CD4-positive, alpha-beta T cell (primary cell): ENCODE measurements at regions of chr6 and their contacts with region 1.

Region 1: DNA sequence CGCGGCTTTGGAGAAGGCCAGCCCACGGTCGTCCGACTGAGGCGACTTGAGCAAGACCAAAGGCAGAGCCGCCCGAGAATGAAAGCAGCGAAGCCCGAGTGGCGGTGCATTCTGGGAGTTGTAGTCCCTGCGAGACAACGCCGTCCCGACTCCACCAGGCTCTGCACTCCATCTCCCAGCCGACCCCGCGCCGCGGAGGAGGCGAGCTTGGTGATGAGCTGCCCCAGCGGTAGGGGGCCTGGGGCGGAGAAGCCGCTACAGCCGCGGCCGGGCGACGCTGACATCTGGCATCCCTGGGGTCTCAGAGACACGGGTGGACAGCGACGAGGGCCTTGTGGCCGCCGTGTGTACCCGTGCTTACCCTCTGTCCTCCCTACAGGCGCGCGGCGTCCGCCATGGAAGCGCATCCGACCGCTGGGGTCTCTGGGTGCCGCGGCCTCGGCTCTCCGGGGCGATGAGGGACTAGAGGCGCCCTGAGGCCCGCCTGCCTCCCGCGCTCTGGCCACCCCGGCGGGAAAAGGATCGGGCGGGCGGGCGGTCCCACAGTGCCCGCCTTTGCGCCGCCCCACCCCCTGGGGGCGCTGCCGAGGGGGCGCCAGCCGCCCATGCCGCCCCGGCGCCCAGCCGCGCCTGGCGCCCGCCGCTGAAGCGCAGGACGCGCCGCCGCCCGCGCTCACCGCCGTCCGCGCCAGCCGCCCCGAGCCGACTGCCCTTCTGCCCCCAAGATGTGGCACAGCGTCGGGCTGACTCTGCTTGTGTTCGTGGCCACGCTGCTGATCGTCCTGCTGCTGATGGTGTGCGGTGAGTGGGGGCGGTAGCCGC is at the start of gene SMIM13:
- DNase-seq: peak; percentile 88 to 97 (median 94)
- ATAC-seq: peak; percentile 92
- H3K4me3 ChIP-seq: peak within 1 kb of the TSS; percentile 83
- H3K4me3 Mint-ChIP-seq: peak within 1 kb of the TSS; percentile 97
- H3K27ac ChIP-seq: peak within 1 kb of the TSS; percentile 87 to 92
- H3K27ac Mint-ChIP-seq: peak within 1 kb of the TSS; percentile 97
- H3K4me1 ChIP-seq: peaks cover 20% of the 10 kb centered on the region
- H3K4me1 Mint-ChIP-seq: peaks cover 29% of the 10 kb centered on the region
- H3K27me3 ChIP-seq: no peaks in the 10 kb centered on the region
- H3K27me3 Mint-ChIP-seq: no peaks in the 10 kb centered on the region
- CTCF ChIP-seq: peak; percentile 74
- total RNA-seq, gene SMIM13: 3.0 to 4.6 TPM

Region 2: GRCh38 chr6:10404107-10404798 is 689.5 kb before region 1 on chr6:
- CTCF ChIA-PET with region 1: no interaction called
- POLR2A ChIA-PET with region 1: no interaction called
- intact Hi-C with region 1: loop called in 1 of 2 experiments (anchors 10 kb)
- DNase-seq: peak; percentile 59 to 93 (median 74)
- ATAC-seq: peak; percentile 86
- H3K4me3 ChIP-seq: peak overlapping the region; percentile 63
- H3K4me3 Mint-ChIP-seq: peak overlapping the region; percentile 89
- H3K27ac ChIP-seq: peak overlapping the region in 1 of 2 donors; percentile 54
- H3K27ac Mint-ChIP-seq: peak overlapping the region; percentile 59
- H3K4me1 ChIP-seq: peaks cover 16% of the 10 kb centered on the region
- H3K4me1 Mint-ChIP-seq: peaks cover 10% of the 10 kb centered on the region
- H3K27me3 ChIP-seq: peaks cover 36 to 38% of the 10 kb centered on the region in 2 experiments
- H3K27me3 Mint-ChIP-seq: peaks cover 65% of the 10 kb centered on the region
- CTCF ChIP-seq: no peak

Region 3: GRCh38 chr6:10747251-10747972 is 346.4 kb before region 1 on chr6 and contains the start of gene TMEM14B:
- CTCF ChIA-PET with region 1: no interaction called
- POLR2A ChIA-PET with region 1: interaction called, 3 read pairs
- intact Hi-C with region 1: loop called in 1 of 2 experiments (anchors 5 kb)
- DNase-seq: peak; percentile 99 to 100 (median 100)
- ATAC-seq: peak; percentile 97
- H3K4me3 ChIP-seq: peak within 1 kb of the TSS; percentile 95
- H3K4me3 Mint-ChIP-seq: peak within 1 kb of the TSS; percentile 86
- H3K27ac ChIP-seq: peak within 1 kb of the TSS; percentile 60 to 75
- H3K27ac Mint-ChIP-seq: peak within 1 kb of the TSS; percentile 97
- H3K4me1 ChIP-seq: peaks cover 35% of the 10 kb centered on the region
- H3K4me1 Mint-ChIP-seq: peaks cover 69% of the 10 kb centered on the region
- H3K27me3 ChIP-seq: no peaks in the 10 kb centered on the region
- H3K27me3 Mint-ChIP-seq: no peaks in the 10 kb centered on the region
- CTCF ChIP-seq: no peak
- total RNA-seq, gene TMEM14B: 41.8 to 44.1 TPM

Region 4: GRCh38 chr6:11241793-11242201 is 148.0 kb after region 1 on chr6:
- CTCF ChIA-PET with region 1: no interaction called
- POLR2A ChIA-PET with region 1: no interaction called
- intact Hi-C with region 1: no loop called
- DNase-seq: no peak
- ATAC-seq: no peak
- H3K4me3 ChIP-seq: no peak overlapping the region
- H3K4me3 Mint-ChIP-seq: no peak overlapping the region
- H3K27ac ChIP-seq: no peak overlapping the region
- H3K27ac Mint-ChIP-seq: no peak overlapping the region
- H3K4me1 ChIP-seq: peaks cover 4% of the 10 kb centered on the region
- H3K4me1 Mint-ChIP-seq: peaks cover 20% of the 10 kb centered on the region
- H3K27me3 ChIP-seq: no peaks in the 10 kb centered on the region
- H3K27me3 Mint-ChIP-seq: no peaks in the 10 kb centered on the region
- CTCF ChIP-seq: no peak

Region 5: DNA sequence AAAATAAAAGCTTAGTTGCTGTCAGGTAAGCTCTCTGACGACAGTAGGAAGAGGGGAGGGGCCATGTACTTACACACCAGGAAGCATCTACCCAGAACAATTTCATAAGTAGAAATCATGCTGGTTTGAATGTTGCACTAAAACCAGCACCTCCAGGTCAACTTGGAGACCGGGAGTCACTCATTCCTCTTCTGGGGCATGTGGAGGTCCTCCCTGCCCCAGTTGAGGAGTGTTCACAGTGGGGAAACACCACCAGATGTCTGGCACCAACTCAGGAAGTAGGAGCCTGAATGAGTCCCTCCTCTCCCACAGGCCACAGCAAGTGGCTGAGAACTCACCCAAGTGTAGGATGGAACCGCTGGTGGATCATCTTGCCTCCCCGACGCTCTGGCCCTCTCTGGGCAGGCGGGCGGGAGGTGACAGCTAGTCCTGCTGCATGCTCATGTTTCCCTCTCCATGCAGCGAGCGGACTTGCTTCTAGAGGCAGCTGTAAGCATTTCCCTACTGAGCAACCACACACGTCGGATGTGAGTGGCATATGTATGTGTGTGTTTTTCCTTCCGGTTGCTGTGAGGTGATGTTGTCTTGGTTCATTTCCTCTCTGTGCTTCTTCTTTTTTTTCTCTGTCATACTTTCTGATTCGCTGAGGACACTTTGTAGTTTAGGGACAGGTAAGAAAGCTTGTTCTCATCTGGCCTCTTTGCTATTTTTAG is 288.2 kb after region 1 on chr6:
- CTCF ChIA-PET with region 1: interaction called, 3 read pairs
- POLR2A ChIA-PET with region 1: interaction called, 7 read pairs
- intact Hi-C with region 1: loop called in 1 of 2 experiments (anchors 2 kb)
- DNase-seq: peak; percentile 41 to 94 (median 59)
- ATAC-seq: peak; percentile 93
- H3K4me3 ChIP-seq: peak overlapping the region; percentile 71
- H3K4me3 Mint-ChIP-seq: peak overlapping the region; percentile 85
- H3K27ac ChIP-seq: peak overlapping the region; percentile 84 to 86
- H3K27ac Mint-ChIP-seq: peak overlapping the region; percentile 93
- H3K4me1 ChIP-seq: peaks cover 48% of the 10 kb centered on the region
- H3K4me1 Mint-ChIP-seq: peaks cover 69% of the 10 kb centered on the region
- H3K27me3 ChIP-seq: no peaks in the 10 kb centered on the region
- H3K27me3 Mint-ChIP-seq: no peaks in the 10 kb centered on the region
- CTCF ChIP-seq: no peak